ENCODE measurements at regions of chr1 and their contacts with region 1.

Region 1: GRCh38 chr1:47225430-47226100 is 6.5 kb downstream of the TAL1 start:
- DNase-seq: peak in 2 of 4 experiments; percentile 56 to 61
- ATAC-seq: no peak
- H3K4me3 ChIP-seq: no peak overlapping the region
- H3K27ac ChIP-seq: no peak overlapping the region; the same call in 2 of the 3 replicates
- H3K4me1 ChIP-seq: peaks cover 25 to 37% of the 10 kb centered on the region in 2 experiments; a peak in 4 of 5 replicates
- H3K27me3 ChIP-seq: no peaks in the 10 kb centered on the region
- CTCF ChIP-seq: no peak
- EP300 ChIP-seq: no peak
- POLR2A ChIP-seq: no peak
- RAD21 ChIP-seq: no peak

Region 2: DNA sequence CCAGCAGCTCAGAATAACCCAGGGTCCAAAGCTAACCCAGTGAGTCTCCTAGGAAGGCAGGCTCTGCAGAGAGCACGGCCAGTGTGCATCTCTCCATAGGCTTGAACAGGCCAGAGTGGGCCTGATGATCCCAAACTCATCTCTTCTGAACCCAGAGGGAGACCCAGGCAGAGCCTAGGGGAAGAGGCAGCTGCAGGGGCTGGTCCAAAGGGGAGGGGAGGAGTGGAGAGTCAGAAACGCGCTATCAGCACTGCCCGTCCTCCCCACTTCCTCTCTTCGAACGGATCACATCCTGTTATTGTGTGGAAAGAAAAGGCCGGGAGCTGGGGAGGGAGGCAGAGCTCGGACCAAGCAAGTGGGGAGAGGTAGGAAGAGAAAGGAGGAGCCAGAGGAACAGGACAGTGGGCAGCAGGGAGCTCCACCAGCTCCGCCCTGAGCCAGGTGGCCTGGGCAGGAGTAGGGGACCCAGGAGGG is 13.7 kb before region 1 on chr1:
- CTCF ChIA-PET with region 1: no interaction called
- POLR2A ChIA-PET with region 1: interaction called, 80 read pairs
- in situ Hi-C with region 1: no loop called
- intact Hi-C with region 1: loop called (anchors 1 kb)
- DNase-seq: peak; percentile 58 to 82 (median 66)
- ATAC-seq: peak; percentile 59
- H3K4me3 ChIP-seq: no peak overlapping the region
- H3K27ac ChIP-seq: peak overlapping the region; percentile 55
- H3K4me1 ChIP-seq: peaks cover 49 to 57% of the 10 kb centered on the region in 2 experiments
- H3K27me3 ChIP-seq: no peaks in the 10 kb centered on the region
- CTCF ChIP-seq: no peak
- EP300 ChIP-seq: peak; percentile 69; the same call in 1 of the 2 replicates
- POLR2A ChIP-seq: peak; percentile 32; the same call in 1 of the 2 replicates
- RAD21 ChIP-seq: no peak

Region 3: GRCh38 chr1:47262787-47263413 is 37.3 kb after region 1 on chr1:
- CTCF ChIA-PET with region 1: no interaction called
- POLR2A ChIA-PET with region 1: interaction called, 4 read pairs
- in situ Hi-C with region 1: no loop called
- intact Hi-C with region 1: loop called (anchors 5 kb)
- DNase-seq: peak; percentile 68 to 82 (median 74)
- ATAC-seq: peak; percentile 91
- H3K4me3 ChIP-seq: no peak overlapping the region
- H3K27ac ChIP-seq: no peak overlapping the region
- H3K4me1 ChIP-seq: no peaks in the 10 kb centered on the region
- H3K27me3 ChIP-seq: no peaks in the 10 kb centered on the region
- CTCF ChIP-seq: peak; percentile 84 to 92 (median 85)
- EP300 ChIP-seq: no peak
- POLR2A ChIP-seq: no peak
- RAD21 ChIP-seq: peak; percentile 92 to 94

Region 4: GRCh38 chr1:47276850-47277249 is 51.3 kb after region 1 on chr1:
- CTCF ChIA-PET with region 1: no interaction called
- POLR2A ChIA-PET with region 1: no interaction called
- in situ Hi-C with region 1: no loop called
- intact Hi-C with region 1: no loop called
- DNase-seq: no peak
- ATAC-seq: no peak
- H3K4me3 ChIP-seq: no peak overlapping the region
- H3K27ac ChIP-seq: no peak overlapping the region
- H3K4me1 ChIP-seq: peaks cover 0 to 2% of the 10 kb centered on the region in 2 experiments; a peak in 2 of 5 replicates
- H3K27me3 ChIP-seq: no peaks in the 10 kb centered on the region
- CTCF ChIP-seq: no peak
- EP300 ChIP-seq: no peak
- POLR2A ChIP-seq: no peak
- RAD21 ChIP-seq: no peak

Region 5: GRCh38 chr1:47449822-47450552 is 224.4 kb after region 1 on chr1:
- CTCF ChIA-PET with region 1: no interaction called
- POLR2A ChIA-PET with region 1: no interaction called
- in situ Hi-C with region 1: no loop called
- intact Hi-C with region 1: no loop called
- DNase-seq: peak; percentile 57 to 80 (median 75)
- ATAC-seq: peak; percentile 90
- H3K4me3 ChIP-seq: no peak overlapping the region
- H3K27ac ChIP-seq: no peak overlapping the region
- H3K4me1 ChIP-seq: peaks cover 0 to 6% of the 10 kb centered on the region in 2 experiments; a peak in 2 of 5 replicates
- H3K27me3 ChIP-seq: peaks cover 52 to 60% of the 10 kb centered on the region in 2 experiments
- CTCF ChIP-seq: peak; percentile 74 to 78 (median 76)
- EP300 ChIP-seq: no peak
- POLR2A ChIP-seq: no peak
- RAD21 ChIP-seq: peak in 1 of 2 experiments; percentile 67; a peak in 3 of 4 replicates

Measured in K562 (cell line).